ENCODE measurements at regions of chr3 and their contacts with region 1.

Region 1: GRCh38 chr3:192467230-192468140 is 259.9 kb downstream of the FGF12 start:
- DNase-seq: peak in 4 of 5 donors; percentile 33 to 45 (median 38)
- ATAC-seq: peak; percentile 45 to 85 (median 80)
- H3K4me3 ChIP-seq: no peak overlapping the region
- H3K27ac ChIP-seq: peak overlapping the region in 1 of 12 donors; percentile 6
- H3K4me1 ChIP-seq: peaks cover 0 to 5% (median 0%) of the 10 kb centered on the region in 12 donors
- H3K27me3 ChIP-seq: peaks cover 0 to 2% (median 0%) of the 10 kb centered on the region in 9 donors
- CTCF ChIP-seq: peak; percentile 83 to 97 (median 92)
- POLR2A ChIP-seq: no peak

Region 2: GRCh38 chr3:192553707-192554106 is 86.2 kb after region 1 on chr3:
- intact Hi-C with region 1: no loop called
- DNase-seq: peak in 1 of 5 donors; percentile 8
- ATAC-seq: no peak
- H3K4me3 ChIP-seq: no peak overlapping the region
- H3K27ac ChIP-seq: peak overlapping the region in 1 of 12 donors; percentile 30
- H3K4me1 ChIP-seq: peaks cover 0 to 26% (median under 1%) of the 10 kb centered on the region in 12 donors
- H3K27me3 ChIP-seq: no peaks in the 10 kb centered on the region
- CTCF ChIP-seq: no peak
- POLR2A ChIP-seq: no peak

Region 3: DNA sequence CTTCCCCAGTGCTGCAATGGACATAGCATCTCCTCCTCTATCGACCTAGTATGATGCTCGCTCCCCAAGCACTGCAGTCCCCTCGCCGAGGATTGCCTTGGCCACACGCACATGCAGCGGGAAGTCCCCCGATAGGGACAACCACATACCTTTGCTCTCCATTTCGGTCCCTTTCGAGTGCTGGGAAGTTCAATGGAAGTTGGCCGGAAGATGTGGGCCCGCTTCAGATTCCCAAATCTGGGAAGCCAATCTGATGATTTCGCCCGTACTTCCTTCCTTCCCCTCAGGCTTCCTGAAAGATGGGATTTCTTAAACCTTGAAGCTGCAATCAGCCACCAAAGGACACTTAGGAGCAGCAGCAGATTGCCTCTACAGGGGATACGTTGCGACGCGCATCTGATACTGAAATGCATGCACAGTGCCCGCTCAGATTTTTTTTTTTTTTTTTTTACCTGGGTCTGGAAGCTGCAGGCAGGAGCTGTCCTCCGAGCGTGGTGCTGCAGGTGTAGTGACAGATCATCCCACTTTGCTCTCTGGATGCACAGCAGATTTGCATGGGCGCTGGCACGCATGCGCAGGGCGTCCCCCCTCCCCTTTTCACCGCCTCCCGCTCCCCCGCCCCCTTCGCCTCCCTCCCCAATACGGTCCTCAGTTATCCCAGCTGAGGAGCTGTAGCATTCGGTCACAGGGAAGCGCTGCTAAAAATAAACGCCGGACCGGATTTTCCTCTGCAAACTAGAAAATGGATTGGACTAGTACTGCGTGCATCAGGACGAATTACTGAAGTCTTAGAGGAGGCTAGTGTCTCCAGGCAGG is 259.8 kb after region 1 on chr3 and contains the start of gene FGF12:
- intact Hi-C with region 1: loop called in 1 of 10 experiments (anchors 2 kb)
- DNase-seq: peak; percentile 82 to 90 (median 90)
- ATAC-seq: peak; percentile 87 to 95 (median 93)
- H3K4me3 ChIP-seq: peak within 1 kb of the TSS; percentile 19 to 70 (median 60)
- H3K27ac ChIP-seq: peak within 1 kb of the TSS; percentile 17 to 82 (median 74)
- H3K4me1 ChIP-seq: peaks cover 0 to 11% (median 1%) of the 10 kb centered on the region in 12 donors
- H3K27me3 ChIP-seq: no peaks in the 10 kb centered on the region
- CTCF ChIP-seq: no peak
- POLR2A ChIP-seq: peak in 1 of 2 donors; percentile 42
- total RNA-seq, gene FGF12: 118 to 420 (median 265) TPM

Region 4: DNA sequence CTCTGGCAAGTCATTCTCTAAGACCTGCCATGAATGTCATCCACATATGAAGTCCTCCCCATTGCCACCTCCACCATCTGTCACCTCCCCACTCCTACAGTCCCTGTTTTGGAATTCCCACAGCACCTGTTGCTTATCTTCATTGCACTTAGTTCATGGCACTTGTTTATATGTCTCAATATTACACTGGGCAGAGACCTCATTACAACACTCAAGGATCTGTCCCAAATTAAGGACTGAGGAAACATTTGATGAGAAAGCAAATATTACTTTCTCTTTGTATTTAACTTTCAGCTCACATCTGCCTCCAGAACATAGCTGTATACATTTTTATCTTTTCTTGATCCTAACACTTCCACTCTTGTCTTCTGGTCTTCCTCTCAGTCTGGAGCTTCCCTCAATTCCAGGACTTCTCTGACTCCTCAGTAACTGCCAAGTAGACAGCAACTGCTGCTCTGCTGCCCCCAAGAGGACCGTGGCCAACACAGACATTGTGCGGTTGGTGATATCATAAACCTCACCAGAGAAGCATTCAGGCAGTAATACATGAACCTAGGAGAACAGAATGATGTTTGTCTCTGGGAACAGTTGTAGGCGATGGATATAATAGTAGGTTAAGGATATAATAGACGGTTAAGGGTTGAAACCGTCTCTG is 304.9 kb after region 1 on chr3:
- intact Hi-C with region 1: loop called in 3 of 10 experiments (anchors 10 kb)
- DNase-seq: peak in 4 of 5 donors; percentile 29 to 54 (median 42)
- ATAC-seq: peak; percentile 75 to 94 (median 90)
- H3K4me3 ChIP-seq: no peak overlapping the region
- H3K27ac ChIP-seq: no peak overlapping the region
- H3K4me1 ChIP-seq: no peaks in the 10 kb centered on the region
- H3K27me3 ChIP-seq: no peaks in the 10 kb centered on the region
- CTCF ChIP-seq: peak in 11 of 12 donors; percentile 24 to 67 (median 49)
- POLR2A ChIP-seq: no peak

Region 5: DNA sequence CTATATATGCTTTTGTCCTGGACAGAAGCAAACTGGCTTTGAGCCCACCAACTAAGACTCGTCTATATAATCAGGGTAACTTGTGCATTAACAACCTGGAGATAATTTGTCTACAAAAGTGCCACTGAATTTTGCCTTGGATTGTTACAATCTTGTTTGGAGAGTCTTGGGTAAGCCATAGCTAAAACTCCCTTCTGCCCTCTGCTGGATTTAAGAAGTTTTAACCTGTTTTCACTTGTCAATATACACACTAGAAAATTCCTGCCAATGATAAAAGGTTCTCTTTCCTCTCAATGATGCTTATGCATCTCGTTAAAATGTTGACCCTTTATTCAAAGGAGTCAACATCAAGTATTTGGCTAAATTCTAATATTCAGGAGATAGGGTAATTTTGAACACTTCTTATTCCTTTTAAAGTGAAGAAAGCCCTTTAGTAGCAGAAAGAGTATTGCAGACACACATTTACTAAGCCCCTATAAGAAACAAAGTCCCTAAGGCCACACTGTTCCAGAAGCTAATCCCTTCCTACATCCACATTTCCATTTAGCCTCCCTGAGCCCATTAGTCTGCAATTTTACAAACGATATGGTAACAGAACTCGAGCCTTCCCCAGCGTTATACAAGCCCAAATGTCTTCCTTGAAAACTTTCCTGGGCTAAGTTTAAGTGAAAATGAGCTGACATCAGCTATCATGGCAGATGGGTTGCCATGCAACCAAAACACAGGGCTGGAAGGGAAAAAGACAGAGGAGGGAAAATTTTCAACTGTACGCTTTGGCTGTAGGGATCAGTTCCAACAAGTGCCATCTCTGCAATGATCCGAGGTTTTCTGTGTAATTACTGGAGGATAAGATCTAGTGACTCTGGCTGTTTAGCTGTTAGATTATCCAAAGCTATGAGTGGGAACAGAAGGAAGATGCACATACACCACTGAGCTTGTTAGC is 335.7 kb after region 1 on chr3:
- intact Hi-C with region 1: loop called (anchors 1 to 5 kb)
- DNase-seq: no peak
- ATAC-seq: peak in 2 of 4 donors; percentile 60 to 63
- H3K4me3 ChIP-seq: no peak overlapping the region
- H3K27ac ChIP-seq: no peak overlapping the region
- H3K4me1 ChIP-seq: peaks cover 0 to 8% (median 1%) of the 10 kb centered on the region in 12 donors
- H3K27me3 ChIP-seq: no peaks in the 10 kb centered on the region
- CTCF ChIP-seq: peak; percentile 41 to 72 (median 60)
- POLR2A ChIP-seq: no peak

Region 6: GRCh38 chr3:193187070-193187722 is 719.7 kb after region 1 on chr3:
- intact Hi-C with region 1: no loop called
- DNase-seq: no peak
- ATAC-seq: no peak
- H3K4me3 ChIP-seq: no peak overlapping the region
- H3K27ac ChIP-seq: no peak overlapping the region
- H3K4me1 ChIP-seq: no peaks in the 10 kb centered on the region
- H3K27me3 ChIP-seq: no peaks in the 10 kb centered on the region
- CTCF ChIP-seq: no peak
- POLR2A ChIP-seq: no peak

Region 7: GRCh38 chr3:193572426-193572908 is 1105.0 kb after region 1 on chr3:
- intact Hi-C with region 1: loop called in 1 of 10 experiments (anchors 10 kb)
- DNase-seq: peak in 4 of 5 donors; percentile 37 to 48 (median 42)
- ATAC-seq: peak; percentile 37 to 79 (median 70)
- H3K4me3 ChIP-seq: no peak overlapping the region
- H3K27ac ChIP-seq: no peak overlapping the region
- H3K4me1 ChIP-seq: no peaks in the 10 kb centered on the region
- H3K27me3 ChIP-seq: no peaks in the 10 kb centered on the region
- CTCF ChIP-seq: peak; percentile 56 to 87 (median 74)
- POLR2A ChIP-seq: no peak

Measured in heart left ventricle (tissue), 16 donors.